GM13976 (cell line): ENCODE measurements at regions of chr3 and their contacts with region 1.

Region 1: DNA sequence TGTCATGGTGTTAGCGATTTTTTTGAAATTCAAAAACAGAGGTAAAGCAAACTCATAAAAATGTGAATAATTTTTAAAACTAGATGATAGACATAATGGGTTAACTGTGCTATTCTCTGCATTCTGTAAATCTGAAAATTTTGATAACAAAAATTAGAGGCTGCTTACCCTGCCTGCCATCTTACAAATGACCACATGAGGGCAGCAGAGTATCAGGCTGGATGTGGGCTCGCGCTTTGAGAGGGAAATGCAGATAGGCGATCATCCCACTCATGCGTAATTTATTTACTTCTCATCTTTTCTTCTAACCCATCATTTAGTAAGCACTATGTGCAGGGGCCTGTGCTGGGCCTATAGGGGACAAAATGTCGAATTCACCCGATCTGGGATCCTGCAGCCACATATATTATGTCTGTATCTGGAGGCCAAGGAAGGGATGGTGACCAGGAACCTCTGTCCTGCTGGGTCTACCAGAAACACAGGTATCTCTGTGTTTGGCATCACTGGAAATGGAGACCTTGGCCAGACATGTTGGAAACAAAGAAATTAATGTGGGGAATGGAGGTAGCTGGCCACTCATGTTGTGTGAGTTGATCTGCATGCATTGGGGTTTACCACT is 7.8 kb upstream of the RAD18 start:
- DNase-seq: peak; percentile 62
- CTCF ChIP-seq: peak; percentile 95

Region 2: GRCh38 chr3:8848696-8849131 is 122.4 kb before region 1 on chr3:
- in situ Hi-C with region 1: no loop called
- DNase-seq: no peak
- CTCF ChIP-seq: no peak

Region 3: DNA sequence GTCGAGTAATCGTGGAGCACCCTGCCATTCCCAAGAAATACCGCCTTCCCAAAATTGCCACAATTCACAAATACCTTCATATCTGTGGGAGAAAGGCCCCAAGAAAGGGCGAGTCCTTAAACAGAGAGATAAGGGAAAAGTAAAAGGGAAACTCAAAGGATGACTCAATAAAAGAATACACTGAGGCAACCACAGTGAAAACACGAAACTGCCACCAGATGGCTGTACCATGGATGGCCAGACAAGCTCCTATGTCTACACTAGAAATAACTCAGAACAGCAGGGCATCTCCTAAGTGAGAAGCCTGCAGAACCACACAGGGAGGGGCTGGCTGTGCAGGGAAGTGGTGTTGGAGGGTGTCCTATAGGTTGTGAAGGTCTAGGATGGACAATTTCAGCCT is 253.4 kb after region 1 on chr3:
- in situ Hi-C with region 1: no loop called
- DNase-seq: peak; percentile 79
- CTCF ChIP-seq: peak; percentile 28

Region 4: GRCh38 chr3:9266716-9267115 is 295.6 kb after region 1 on chr3:
- in situ Hi-C with region 1: no loop called
- DNase-seq: no peak
- CTCF ChIP-seq: no peak

Region 5: GRCh38 chr3:9302425-9303181 is 331.5 kb after region 1 on chr3:
- in situ Hi-C with region 1: loop called (anchors 5 kb)
- DNase-seq: peak; percentile 86
- CTCF ChIP-seq: peak; percentile 84